ENCODE measurements at regions of chr1 and their contacts with region 1.

Region 1: DNA sequence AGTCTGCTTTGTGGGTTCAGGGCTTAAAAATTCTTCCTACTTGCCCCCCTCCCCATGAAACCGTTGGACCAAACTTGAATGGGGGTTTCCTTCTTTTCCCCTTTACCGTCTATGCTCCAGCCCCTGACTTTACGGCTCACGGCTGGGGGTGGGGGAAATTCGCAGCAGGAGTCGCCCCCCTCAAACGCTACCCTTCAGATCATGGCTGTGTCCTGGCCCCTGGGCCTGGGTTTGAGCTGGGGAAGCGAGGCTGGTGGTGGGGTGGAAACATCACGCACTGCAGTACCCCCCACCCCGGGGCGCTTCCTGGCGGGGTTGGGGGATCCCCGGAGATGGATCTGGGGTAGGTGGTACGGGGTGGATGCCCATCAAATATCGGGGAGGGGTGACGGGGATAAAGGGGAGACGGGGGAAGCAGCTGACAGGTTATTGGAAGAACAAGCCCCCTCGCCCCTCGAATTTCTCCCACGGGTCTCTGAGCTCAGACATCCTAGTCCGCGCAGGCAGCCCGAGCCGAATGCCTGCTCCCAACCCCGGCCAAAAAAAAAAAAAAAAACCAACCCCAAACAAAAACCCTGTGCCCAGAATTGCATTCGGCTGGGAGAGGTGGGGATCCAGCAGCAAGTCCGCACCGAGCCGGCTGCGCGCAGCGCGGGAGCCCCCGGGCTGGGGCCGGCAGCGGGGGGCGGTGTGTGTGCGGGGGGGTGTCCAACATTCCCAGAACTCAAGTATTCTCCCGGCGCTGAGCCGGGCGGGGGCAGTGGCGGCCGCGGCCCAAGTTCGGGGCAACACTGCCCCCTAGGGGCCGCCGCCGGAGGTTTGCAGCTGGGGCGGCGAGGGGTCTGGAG is 59.0 kb upstream of the ACOT11 start:
- DNase-seq: peak; percentile 91 to 95 (median 92)
- H3K4me3 ChIP-seq: peak overlapping the region; percentile 54
- H3K27ac ChIP-seq: peak overlapping the region; percentile 88 to 92
- H3K4me1 ChIP-seq: peaks cover 13% of the 10 kb centered on the region
- H3K27me3 ChIP-seq: no peaks in the 10 kb centered on the region
- CTCF ChIP-seq: peak; percentile 94 to 98 (median 97)
- EP300 ChIP-seq: no peak
- POLR2A ChIP-seq: peak; percentile 17

Region 2: GRCh38 chr1:54070171-54070837 is 418.7 kb before region 1 on chr1:
- intact Hi-C with region 1: loop called in 3 of 4 experiments (anchors 5 to 10 kb)
- DNase-seq: no peak
- H3K4me3 ChIP-seq: no peak overlapping the region
- H3K27ac ChIP-seq: no peak overlapping the region
- H3K4me1 ChIP-seq: peaks cover 1% of the 10 kb centered on the region
- H3K27me3 ChIP-seq: no peaks in the 10 kb centered on the region
- CTCF ChIP-seq: peak; percentile 45 to 89 (median 73)
- EP300 ChIP-seq: no peak
- POLR2A ChIP-seq: no peak

Region 3: GRCh38 chr1:54121482-54122134 is 367.4 kb before region 1 on chr1:
- intact Hi-C with region 1: loop called in 3 of 4 experiments (anchors 5 to 10 kb)
- DNase-seq: peak; percentile 85 to 91 (median 89)
- H3K4me3 ChIP-seq: no peak overlapping the region
- H3K27ac ChIP-seq: no peak overlapping the region
- H3K4me1 ChIP-seq: peaks cover 4% of the 10 kb centered on the region
- H3K27me3 ChIP-seq: no peaks in the 10 kb centered on the region
- CTCF ChIP-seq: peak; percentile 76 to 83 (median 80)
- EP300 ChIP-seq: no peak
- POLR2A ChIP-seq: no peak

Region 4: GRCh38 chr1:54347955-54348699 is 140.9 kb before region 1 on chr1:
- intact Hi-C with region 1: no loop called
- DNase-seq: no peak
- H3K4me3 ChIP-seq: no peak overlapping the region
- H3K27ac ChIP-seq: no peak overlapping the region
- H3K4me1 ChIP-seq: peaks cover 21% of the 10 kb centered on the region
- H3K27me3 ChIP-seq: no peaks in the 10 kb centered on the region
- CTCF ChIP-seq: no peak
- EP300 ChIP-seq: no peak
- POLR2A ChIP-seq: no peak

Measured in ovary (tissue), 10 donors.